MCF 10A (cell line): ENCODE measurements at regions of chr10 and their contacts with region 1.

Region 1: GRCh38 chr10:100346765-100347567 is at the start of gene SCD:
- DNase-seq: peak; percentile 97
- H3K4me3 Mint-ChIP-seq: peak within 1 kb of the TSS; percentile 97
- H3K27ac Mint-ChIP-seq: peak within 1 kb of the TSS; percentile 83
- H3K4me1 Mint-ChIP-seq: peaks cover 53% of the 10 kb centered on the region
- H3K27me3 Mint-ChIP-seq: no peaks in the 10 kb centered on the region
- CTCF ChIP-seq: no peak
- total RNA-seq, gene SCD: 101 and 179 TPM in 2 replicates

Region 2: GRCh38 chr10:99966306-99966705 is 380.7 kb before region 1 on chr10:
- CTCF ChIA-PET with region 1: no interaction called
- POLR2A ChIA-PET with region 1: no interaction called
- intact Hi-C with region 1: no loop called
- DNase-seq: peak; percentile 78
- H3K4me3 Mint-ChIP-seq: no peak overlapping the region
- H3K27ac Mint-ChIP-seq: peak overlapping the region; percentile 49
- H3K4me1 Mint-ChIP-seq: peaks cover 12% of the 10 kb centered on the region
- H3K27me3 Mint-ChIP-seq: no peaks in the 10 kb centered on the region
- CTCF ChIP-seq: no peak

Region 3: GRCh38 chr10:100286051-100287033 is 60.6 kb before region 1 on chr10 and contains the start of gene BLOC1S2:
- CTCF ChIA-PET with region 1: interaction called, 3 read pairs
- POLR2A ChIA-PET with region 1: interaction called, 20 read pairs
- intact Hi-C with region 1: no loop called
- DNase-seq: peak; percentile 92
- H3K4me3 Mint-ChIP-seq: peak within 1 kb of the TSS; percentile 96
- H3K27ac Mint-ChIP-seq: peak within 1 kb of the TSS; percentile 93
- H3K4me1 Mint-ChIP-seq: peaks cover 19% of the 10 kb centered on the region
- H3K27me3 Mint-ChIP-seq: no peaks in the 10 kb centered on the region
- CTCF ChIP-seq: no peak
- total RNA-seq, gene BLOC1S2: 86.7 and 98.4 TPM in 2 replicates

Region 4: GRCh38 chr10:100364735-100365391 is 17.9 kb after region 1 on chr10:
- CTCF ChIA-PET with region 1: interaction called, 35 read pairs
- POLR2A ChIA-PET with region 1: interaction called, 493 read pairs
- intact Hi-C with region 1: loop called (anchors 2 kb)
- DNase-seq: peak; percentile 96
- H3K4me3 Mint-ChIP-seq: peak overlapping the region; percentile 21
- H3K27ac Mint-ChIP-seq: peak overlapping the region; percentile 12
- H3K4me1 Mint-ChIP-seq: peaks cover 53% of the 10 kb centered on the region
- H3K27me3 Mint-ChIP-seq: no peaks in the 10 kb centered on the region
- CTCF ChIP-seq: no peak

Region 5: GRCh38 chr10:100373298-100374136 is 26.6 kb after region 1 on chr10:
- CTCF ChIA-PET with region 1: interaction called, 35 read pairs
- POLR2A ChIA-PET with region 1: interaction called, 493 read pairs
- intact Hi-C with region 1: loop called (anchors 1 kb)
- DNase-seq: peak; percentile 100
- H3K4me3 Mint-ChIP-seq: no peak overlapping the region
- H3K27ac Mint-ChIP-seq: no peak overlapping the region
- H3K4me1 Mint-ChIP-seq: peaks cover 14% of the 10 kb centered on the region
- H3K27me3 Mint-ChIP-seq: no peaks in the 10 kb centered on the region
- CTCF ChIP-seq: no peak

Region 6: GRCh38 chr10:100481462-100482081 is 134.6 kb after region 1 on chr10:
- CTCF ChIA-PET with region 1: interaction called, 3 read pairs
- POLR2A ChIA-PET with region 1: interaction called, 11 read pairs
- intact Hi-C with region 1: no loop called
- DNase-seq: peak; percentile 89
- H3K4me3 Mint-ChIP-seq: no peak overlapping the region
- H3K27ac Mint-ChIP-seq: no peak overlapping the region
- H3K4me1 Mint-ChIP-seq: peaks cover 5% of the 10 kb centered on the region
- H3K27me3 Mint-ChIP-seq: peaks cover 37% of the 10 kb centered on the region
- CTCF ChIP-seq: no peak

Region 7: GRCh38 chr10:100518761-100519241 is 171.8 kb after region 1 on chr10:
- CTCF ChIA-PET with region 1: interaction called, 10 read pairs
- POLR2A ChIA-PET with region 1: no interaction called
- intact Hi-C with region 1: no loop called
- DNase-seq: peak; percentile 72
- H3K4me3 Mint-ChIP-seq: no peak overlapping the region
- H3K27ac Mint-ChIP-seq: no peak overlapping the region
- H3K4me1 Mint-ChIP-seq: no peaks in the 10 kb centered on the region
- H3K27me3 Mint-ChIP-seq: no peaks in the 10 kb centered on the region
- CTCF ChIP-seq: peak; percentile 63